GM10248 (cell line): ENCODE measurements at regions of chr19 and their contacts with region 1.

Region 1: GRCh38 chr19:51660975-51661600 is 14.5 kb upstream of the SIGLEC14 start:
- DNase-seq: peak; percentile 58
- CTCF ChIP-seq: peak; percentile 82

Region 2: GRCh38 chr19:51467864-51468544 is 193.1 kb before region 1 on chr19:
- CTCF ChIA-PET with region 1: interaction called, 250 read pairs
- POLR2A ChIA-PET with region 1: no interaction called
- DNase-seq: no peak
- CTCF ChIP-seq: no peak

Region 3: DNA sequence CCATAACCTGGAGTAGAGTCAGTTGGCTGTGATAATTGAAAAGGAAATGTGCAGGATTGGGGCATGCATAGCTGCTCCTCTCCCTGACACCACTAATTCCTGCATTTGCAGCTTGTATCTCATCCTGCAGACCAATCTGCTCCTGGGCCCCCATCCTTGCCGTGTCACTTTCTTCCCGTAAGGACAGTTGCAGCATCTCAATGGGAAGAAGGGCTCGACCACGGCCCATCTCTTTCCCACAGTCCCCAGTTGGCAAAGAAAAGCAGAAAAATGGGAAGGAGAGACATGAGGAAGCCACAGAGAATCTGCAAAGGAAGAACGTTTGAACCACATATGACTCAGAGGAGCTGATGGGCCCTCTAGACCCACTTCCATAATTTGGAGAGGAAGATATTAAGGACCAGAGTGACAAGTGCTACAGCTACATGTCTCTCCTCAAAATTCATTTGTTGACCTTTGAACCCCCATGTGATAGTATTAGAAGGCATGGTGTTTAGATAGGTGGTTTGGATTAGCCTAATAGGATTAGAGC is 157.7 kb before region 1 on chr19:
- CTCF ChIA-PET with region 1: interaction called, 12 read pairs
- POLR2A ChIA-PET with region 1: no interaction called
- DNase-seq: no peak
- CTCF ChIP-seq: no peak

Region 4: GRCh38 chr19:51514866-51515481 is 146.1 kb before region 1 on chr19:
- CTCF ChIA-PET with region 1: interaction called, 30 read pairs
- POLR2A ChIA-PET with region 1: no interaction called
- DNase-seq: peak; percentile 63
- CTCF ChIP-seq: peak; percentile 67

Region 5: GRCh38 chr19:51586103-51586728 is 74.9 kb before region 1 on chr19:
- CTCF ChIA-PET with region 1: no interaction called
- POLR2A ChIA-PET with region 1: no interaction called
- DNase-seq: no peak
- CTCF ChIP-seq: no peak

Region 6: DNA sequence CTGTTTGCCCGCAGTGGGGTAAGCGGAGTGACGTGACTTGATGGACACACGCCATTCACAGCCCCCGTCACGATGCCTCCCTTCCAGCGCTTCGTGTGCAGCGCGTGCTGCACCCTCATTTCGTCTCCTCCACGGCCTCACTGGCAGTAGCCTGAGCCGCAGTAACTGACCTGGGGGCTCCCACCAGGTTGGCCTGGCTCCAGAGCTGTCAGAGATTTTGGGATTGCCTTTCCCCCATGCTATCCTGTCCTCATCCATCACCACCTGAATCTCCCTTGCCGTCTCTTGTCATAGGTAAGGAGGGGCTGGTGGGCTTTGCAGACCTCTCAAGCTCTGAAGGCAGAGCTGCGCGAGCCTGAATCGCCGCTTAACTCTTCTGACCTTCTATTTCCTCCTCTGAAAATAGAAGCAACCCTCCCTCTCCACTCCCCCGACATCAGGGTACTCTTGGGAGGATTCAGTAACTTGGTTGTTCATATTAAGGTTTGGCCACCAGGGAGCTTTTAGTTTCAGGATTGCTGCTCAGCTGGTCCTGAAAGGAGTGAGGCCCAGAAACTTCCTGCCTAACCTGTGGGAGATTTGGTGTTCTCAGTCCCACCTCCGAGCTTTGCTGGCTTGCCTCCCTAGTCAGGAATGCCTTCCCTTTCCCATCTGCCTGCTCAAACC is 58.8 kb before region 1 on chr19:
- CTCF ChIA-PET with region 1: interaction called, 10 read pairs
- POLR2A ChIA-PET with region 1: no interaction called
- DNase-seq: peak; percentile 63
- CTCF ChIP-seq: no peak

Region 7: DNA sequence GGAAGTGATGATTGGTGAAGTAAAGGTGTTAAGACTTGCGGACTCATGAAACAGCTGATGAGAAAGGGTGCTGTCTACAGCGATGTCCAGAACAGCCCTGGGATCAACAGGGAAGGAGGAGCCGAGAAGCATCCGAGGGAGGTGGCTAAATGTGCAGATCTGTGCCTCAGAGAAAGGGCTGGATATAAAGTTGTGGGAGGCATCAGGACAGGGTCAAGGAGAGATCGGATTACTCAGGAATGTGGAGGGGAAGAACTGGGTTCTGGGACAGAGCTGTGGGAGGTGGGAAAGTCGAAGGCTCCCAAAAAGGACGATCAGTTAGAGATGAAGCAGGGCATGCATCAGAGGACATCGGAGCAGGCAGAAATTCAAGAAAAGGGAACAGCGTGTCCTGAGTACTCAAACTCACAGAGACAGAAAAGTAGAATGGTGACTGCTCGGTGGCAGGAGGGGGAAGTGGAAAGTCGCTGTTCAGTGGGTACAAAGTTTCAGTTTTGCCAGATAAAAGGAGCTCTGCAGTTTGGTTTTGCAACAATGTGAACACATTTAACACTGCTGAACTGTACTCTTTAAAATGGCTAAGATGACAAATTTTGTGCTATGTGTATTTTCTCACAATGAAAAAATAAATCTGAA is 16.3 kb before region 1 on chr19:
- CTCF ChIA-PET with region 1: interaction called, 27 read pairs
- POLR2A ChIA-PET with region 1: no interaction called
- DNase-seq: no peak
- CTCF ChIP-seq: no peak

Region 8: DNA sequence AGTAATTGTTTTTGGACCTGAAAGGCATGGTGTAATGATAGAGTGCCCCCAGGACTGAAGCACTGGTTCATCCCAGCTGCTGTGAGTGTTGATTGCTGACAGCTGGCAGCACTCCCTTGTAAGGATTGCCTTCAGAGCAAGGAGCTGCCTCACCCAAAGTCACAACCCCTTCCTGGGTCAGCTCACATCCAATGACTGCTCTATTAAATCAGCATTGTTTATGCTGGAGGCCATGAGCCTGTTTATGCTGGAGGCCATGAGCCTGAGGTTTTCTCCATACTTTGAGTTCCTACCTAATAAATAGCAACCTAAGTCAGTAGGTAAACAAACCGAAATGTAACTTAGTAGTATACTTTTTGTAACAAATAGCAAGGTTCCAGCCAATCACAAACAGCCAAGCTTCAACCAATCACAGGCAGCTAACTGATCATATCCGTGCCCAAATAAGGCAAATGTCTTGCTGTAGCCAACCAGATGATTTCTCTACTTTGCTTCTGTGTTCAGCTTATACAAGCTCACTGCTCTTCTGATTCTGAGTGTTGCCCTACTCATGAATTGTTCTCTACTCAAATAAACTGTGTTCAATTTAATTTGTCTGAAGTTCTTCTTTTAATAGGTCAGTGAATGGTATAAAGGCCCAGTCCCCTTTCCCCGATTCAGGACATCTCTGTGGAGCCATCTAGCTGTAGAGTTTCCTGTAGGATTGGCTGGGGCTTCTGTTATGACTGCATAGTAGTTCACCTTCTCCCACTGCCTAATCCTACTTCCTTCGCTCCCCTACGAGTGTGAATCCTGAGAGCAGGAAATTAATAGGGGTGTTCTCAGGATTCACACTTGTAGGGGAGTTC is 20.5 kb after region 1 on chr19:
- CTCF ChIA-PET with region 1: interaction called, 27 read pairs
- POLR2A ChIA-PET with region 1: no interaction called
- DNase-seq: no peak
- CTCF ChIP-seq: no peak